Heart left ventricle (tissue), 16 donors: ENCODE measurements at regions of chr1 and their contacts with region 1.

Region 1: GRCh38 chr1:150561974-150562445 is 12.8 kb downstream of the ADAMTSL4 start:
- DNase-seq: peak; percentile 95 to 98 (median 97)
- ATAC-seq: peak; percentile 82 to 87 (median 85)
- H3K4me3 ChIP-seq: peak overlapping the region; percentile 38 to 69 (median 60)
- H3K27ac ChIP-seq: peak overlapping the region; percentile 94 to 100 (median 100)
- H3K4me1 ChIP-seq: peaks cover 28 to 88% (median 75%) of the 10 kb centered on the region in 12 donors
- H3K27me3 ChIP-seq: no peaks in the 10 kb centered on the region
- CTCF ChIP-seq: no peak
- POLR2A ChIP-seq: no peak

Region 2: GRCh38 chr1:150486964-150487762 is 74.8 kb before region 1 on chr1 and contains the start of gene TARS2:
- intact Hi-C with region 1: loop called in 1 of 10 experiments (anchors 2 kb)
- DNase-seq: peak; percentile 92 to 97 (median 96)
- ATAC-seq: peak; percentile 100
- H3K4me3 ChIP-seq: peak within 1 kb of the TSS; percentile 59 to 99 (median 76)
- H3K27ac ChIP-seq: peak within 1 kb of the TSS; percentile 55 to 89 (median 77)
- H3K4me1 ChIP-seq: peaks cover 0 to 18% (median 9%) of the 10 kb centered on the region in 12 donors
- H3K27me3 ChIP-seq: no peaks in the 10 kb centered on the region
- CTCF ChIP-seq: peak in 9 of 12 donors; percentile 13 to 43 (median 26)
- POLR2A ChIP-seq: peak in 1 of 2 donors; percentile 65
- total RNA-seq, gene TARS2: 21.9 to 46.5 (median 28.9) TPM

Region 3: DNA sequence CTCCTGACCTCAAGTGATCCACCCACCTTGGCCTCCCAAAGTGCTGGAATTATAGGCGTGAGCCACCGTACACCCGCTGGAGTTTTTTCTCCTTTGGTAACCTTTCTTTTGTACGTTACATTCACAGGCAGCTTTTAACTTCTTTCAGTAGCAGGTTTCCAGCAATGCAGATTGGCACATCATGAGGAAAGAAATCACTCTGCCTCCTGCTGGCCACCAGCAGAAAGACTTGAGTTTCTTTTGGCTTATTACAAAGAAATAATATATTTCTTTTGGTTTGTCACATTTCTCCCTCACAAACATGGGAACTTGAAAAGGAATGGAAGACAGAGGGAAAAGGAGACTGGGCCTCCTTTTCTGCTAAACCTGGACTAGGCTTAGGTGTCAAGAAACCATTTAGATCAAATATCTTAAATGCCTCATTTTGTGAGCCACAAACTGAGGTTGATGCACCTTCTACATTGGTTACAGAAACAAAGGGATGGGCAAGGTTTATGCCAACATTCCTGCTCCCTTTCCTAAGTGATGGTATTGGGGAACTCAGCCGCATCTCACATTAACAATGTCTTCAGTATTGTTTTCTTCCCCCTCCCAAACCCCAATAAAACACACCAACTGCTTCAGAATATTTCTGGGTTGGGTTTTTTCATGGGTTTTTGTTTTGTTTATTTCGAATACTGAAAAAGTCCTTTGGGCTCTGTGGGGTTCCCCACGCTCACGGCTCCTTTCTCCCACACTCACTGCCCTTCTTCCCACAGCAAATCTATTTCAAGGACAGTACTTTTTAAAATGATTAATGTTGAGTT is 59.7 kb after region 1 on chr1:
- intact Hi-C with region 1: loop called (anchors 1 to 5 kb)
- DNase-seq: peak in 3 of 5 donors; percentile 47 to 64 (median 53)
- ATAC-seq: peak in 2 of 4 donors; percentile 24 to 25
- H3K4me3 ChIP-seq: no peak overlapping the region
- H3K27ac ChIP-seq: peak overlapping the region; percentile 53 to 88 (median 70)
- H3K4me1 ChIP-seq: peaks cover 16 to 54% (median 43%) of the 10 kb centered on the region in 12 donors
- H3K27me3 ChIP-seq: no peaks in the 10 kb centered on the region
- CTCF ChIP-seq: peak; percentile 47 to 81 (median 71)
- POLR2A ChIP-seq: no peak

Region 4: GRCh38 chr1:150642296-150642695 is 80.3 kb after region 1 on chr1:
- intact Hi-C with region 1: no loop called
- DNase-seq: no peak
- ATAC-seq: no peak
- H3K4me3 ChIP-seq: no peak overlapping the region
- H3K27ac ChIP-seq: no peak overlapping the region
- H3K4me1 ChIP-seq: no peaks in the 10 kb centered on the region
- H3K27me3 ChIP-seq: no peaks in the 10 kb centered on the region
- CTCF ChIP-seq: no peak
- POLR2A ChIP-seq: no peak

Region 5: GRCh38 chr1:150696590-150697524 is 134.8 kb after region 1 on chr1 and contains the start of gene GOLPH3L:
- intact Hi-C with region 1: loop called in 3 of 10 experiments (anchors 5 to 10 kb)
- DNase-seq: peak; percentile 85 to 95 (median 95)
- ATAC-seq: peak; percentile 100
- H3K4me3 ChIP-seq: peak within 1 kb of the TSS; percentile 51 to 85 (median 73)
- H3K27ac ChIP-seq: peak within 1 kb of the TSS in 11 of 12 donors; percentile 32 to 78 (median 57)
- H3K4me1 ChIP-seq: peaks cover 0 to 24% (median 13%) of the 10 kb centered on the region in 12 donors
- H3K27me3 ChIP-seq: no peaks in the 10 kb centered on the region
- CTCF ChIP-seq: peak in 5 of 12 donors; percentile 18 to 52 (median 34)
- POLR2A ChIP-seq: peak in 1 of 2 donors; percentile 54
- total RNA-seq, gene GOLPH3L: 11.4 to 22.1 (median 14.7) TPM